GM10248 (cell line): ENCODE measurements at regions of chr3 and their contacts with region 1.

Region 1: GRCh38 chr3:16928386-16929132 is 43.8 kb downstream of the PLCL2 start:
- DNase-seq: no peak
- CTCF ChIP-seq: no peak

Region 2: DNA sequence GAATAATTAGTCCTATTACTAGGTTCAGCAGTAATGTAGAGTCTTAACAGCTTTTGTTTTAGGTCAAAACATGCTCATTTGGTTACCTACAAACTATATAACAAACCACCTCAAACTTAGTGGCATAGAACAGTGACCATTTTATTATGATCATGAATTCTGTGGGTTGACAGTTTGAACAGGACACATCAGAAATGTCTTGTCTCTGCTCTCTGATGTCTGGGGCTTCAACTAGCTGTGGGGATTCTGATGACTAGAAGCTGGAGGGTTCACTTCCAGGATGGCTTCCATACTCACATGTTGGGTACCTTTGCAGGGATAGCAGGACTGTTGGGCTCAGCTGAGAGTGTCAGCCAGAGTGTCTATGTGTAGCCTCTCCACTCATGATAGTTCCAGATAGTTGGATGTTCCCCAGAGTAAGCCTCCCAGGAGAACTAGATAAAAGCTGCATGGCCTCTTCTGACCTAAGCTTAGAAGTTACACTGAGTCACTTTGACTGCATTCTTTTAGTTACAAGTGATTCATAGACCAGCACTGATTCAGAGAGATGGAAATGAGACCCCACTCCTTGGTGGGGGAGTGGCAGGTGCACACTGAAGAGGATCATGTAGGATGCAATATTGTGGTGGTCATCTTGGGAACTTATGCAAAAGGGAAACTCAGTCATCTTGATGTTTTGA is 11.2 kb before region 1 on chr3:
- CTCF ChIA-PET with region 1: interaction called, 12 read pairs
- POLR2A ChIA-PET with region 1: no interaction called
- DNase-seq: no peak
- CTCF ChIP-seq: no peak